Prostate gland (tissue), 2 donors: ENCODE measurements at regions of chr7 and their contacts with region 1.

Region 1: GRCh38 chr7:71237945-71238344 is 106.0 kb downstream of the GALNT17 start:
- DNase-seq: peak; percentile 48
- H3K4me3 ChIP-seq: no peak overlapping the region
- H3K27ac ChIP-seq: peak overlapping the region; percentile 60 to 77
- H3K4me1 ChIP-seq: peaks cover 3% of the 10 kb centered on the region
- H3K27me3 ChIP-seq: no peaks in the 10 kb centered on the region
- CTCF ChIP-seq: peak in 1 of 4 experiments; percentile 47
- POLR2A ChIP-seq: no peak

Region 2: GRCh38 chr7:71120096-71120495 is 117.8 kb before region 1 on chr7:
- intact Hi-C with region 1: no loop called
- DNase-seq: no peak
- H3K4me3 ChIP-seq: no peak overlapping the region
- H3K27ac ChIP-seq: no peak overlapping the region
- H3K4me1 ChIP-seq: no peaks in the 10 kb centered on the region
- H3K27me3 ChIP-seq: no peaks in the 10 kb centered on the region
- CTCF ChIP-seq: no peak
- POLR2A ChIP-seq: no peak

Region 3: DNA sequence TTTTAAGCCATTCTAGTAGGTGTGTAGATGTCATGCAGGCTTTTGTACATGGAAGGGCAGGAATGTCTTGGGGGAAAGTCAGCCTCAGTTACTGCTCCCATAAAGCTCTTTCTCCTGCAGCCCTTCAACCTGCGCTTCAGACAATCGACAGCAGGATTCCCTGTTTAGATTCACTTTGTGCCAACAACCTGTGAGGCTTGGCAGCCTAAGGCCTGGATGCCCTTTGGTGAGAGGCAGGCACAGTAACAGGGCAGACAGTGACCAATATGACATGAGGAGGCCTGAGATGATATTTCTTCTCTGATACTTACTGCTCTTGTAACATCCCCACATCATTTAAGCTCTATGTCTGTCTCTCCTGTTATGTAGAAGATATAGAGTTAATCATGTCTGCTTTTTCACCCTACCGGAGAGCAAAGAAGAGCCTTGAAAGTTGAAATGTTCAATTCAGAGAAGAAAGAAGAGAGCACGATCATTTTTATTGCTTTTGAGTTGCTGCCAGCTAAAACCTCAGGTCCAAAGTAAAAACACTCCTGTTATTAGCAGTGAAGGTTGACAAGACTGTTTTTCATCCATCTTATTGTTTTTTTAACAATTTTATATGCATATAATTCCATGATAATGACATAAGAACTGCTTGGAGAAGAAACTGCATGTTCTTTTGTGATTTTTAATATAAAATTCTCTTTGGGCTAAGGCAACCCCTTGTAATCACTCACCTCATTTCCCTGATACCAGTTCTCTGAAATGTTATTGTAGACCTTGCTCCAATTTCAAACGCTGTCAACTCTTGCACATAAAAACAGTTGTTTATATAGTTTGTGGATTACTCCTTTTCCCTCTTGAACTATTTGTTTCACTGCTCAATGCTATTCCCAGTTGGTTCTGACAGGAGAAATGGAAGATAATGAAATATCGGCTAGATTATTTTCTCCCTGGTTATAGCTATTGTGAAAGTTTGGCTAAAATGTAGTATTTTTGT is 34.9 kb after region 1 on chr7:
- intact Hi-C with region 1: loop called (anchors 2 kb)
- DNase-seq: no peak
- H3K4me3 ChIP-seq: no peak overlapping the region
- H3K27ac ChIP-seq: peak overlapping the region; percentile 33 to 48
- H3K4me1 ChIP-seq: peaks cover 4% of the 10 kb centered on the region
- H3K27me3 ChIP-seq: no peaks in the 10 kb centered on the region
- CTCF ChIP-seq: no peak
- POLR2A ChIP-seq: no peak

Region 4: DNA sequence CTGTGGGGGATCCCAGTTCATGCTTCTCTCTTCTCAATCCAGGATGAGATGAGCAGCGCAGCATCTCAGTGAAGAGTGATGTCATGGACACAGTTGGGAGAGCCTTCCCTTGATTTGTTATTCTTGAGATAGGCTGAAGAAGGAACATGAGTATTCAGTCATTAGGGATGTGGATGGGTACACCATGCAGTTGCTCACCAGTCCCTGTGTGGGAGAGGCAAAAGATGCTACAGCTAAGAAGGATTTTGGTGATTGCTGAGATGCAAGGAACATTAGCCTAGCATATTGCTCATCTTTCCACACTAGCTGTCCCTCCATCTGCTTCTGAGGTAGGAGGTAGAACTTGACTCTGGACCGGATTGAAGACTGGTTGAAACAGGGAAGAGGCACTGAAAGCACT is 73.6 kb after region 1 on chr7:
- intact Hi-C with region 1: loop called (anchors 5 kb)
- DNase-seq: no peak
- H3K4me3 ChIP-seq: no peak overlapping the region
- H3K27ac ChIP-seq: no peak overlapping the region
- H3K4me1 ChIP-seq: no peaks in the 10 kb centered on the region
- H3K27me3 ChIP-seq: no peaks in the 10 kb centered on the region
- CTCF ChIP-seq: no peak
- POLR2A ChIP-seq: no peak

Region 5: DNA sequence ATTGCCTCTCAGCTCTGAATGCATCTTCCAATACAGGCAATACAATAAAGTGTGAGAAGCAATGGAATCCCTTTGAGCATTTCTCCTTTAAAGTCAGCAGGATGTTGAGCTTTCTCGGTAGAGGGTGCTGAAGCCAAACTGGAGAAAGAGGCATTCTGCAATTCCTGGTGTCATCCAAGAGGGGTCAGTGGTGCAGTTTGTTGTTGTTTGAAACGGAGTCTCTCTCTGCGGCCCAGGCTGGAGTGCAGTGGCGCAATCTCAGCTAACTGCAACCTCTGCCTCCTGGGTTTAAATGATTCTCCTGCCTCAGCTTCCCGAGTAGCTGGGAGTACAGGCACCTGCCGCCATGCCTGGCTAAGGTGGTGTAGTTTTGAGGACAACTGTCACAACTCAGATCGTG is 687.7 kb after region 1 on chr7:
- intact Hi-C with region 1: no loop called
- DNase-seq: no peak
- H3K4me3 ChIP-seq: no peak overlapping the region
- H3K27ac ChIP-seq: no peak overlapping the region
- H3K4me1 ChIP-seq: no peaks in the 10 kb centered on the region
- H3K27me3 ChIP-seq: no peaks in the 10 kb centered on the region
- CTCF ChIP-seq: no peak
- POLR2A ChIP-seq: no peak